ENCODE measurements at regions of chr2 and their contacts with region 1.

Region 1: DNA sequence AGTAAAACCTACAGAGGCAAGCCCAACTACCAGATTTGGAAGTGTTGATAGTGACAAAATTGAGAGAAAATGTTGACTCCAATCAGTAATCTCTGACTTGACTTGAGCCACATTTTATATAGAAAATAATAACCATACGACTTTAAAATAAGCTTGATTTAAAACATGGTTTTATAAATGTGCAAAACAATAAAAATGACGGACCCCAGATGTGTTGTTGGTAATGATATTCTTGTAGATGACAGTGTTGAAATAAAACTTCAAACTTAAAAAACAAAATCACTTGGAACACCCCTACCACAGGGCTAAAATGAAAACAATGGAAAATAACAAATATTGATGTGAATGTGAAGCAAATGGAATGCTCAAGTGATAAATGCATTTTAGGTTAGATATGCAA is 188.1 kb downstream of the SRBD1 start:
- DNase-seq: no peak
- H3K4me3 ChIP-seq: no peak overlapping the region
- H3K27ac ChIP-seq: no peak overlapping the region
- H3K4me1 ChIP-seq: no peaks in the 10 kb centered on the region
- H3K27me3 ChIP-seq: no peaks in the 10 kb centered on the region
- CTCF ChIP-seq: no peak

Region 2: GRCh38 chr2:45283764-45284620 is 138.9 kb before region 1 on chr2:
- intact Hi-C with region 1: loop called (anchors 10 kb)
- DNase-seq: peak in 1 of 2 donors; percentile 78
- H3K4me3 ChIP-seq: no peak overlapping the region
- H3K27ac ChIP-seq: peak overlapping the region; percentile 65 to 72
- H3K4me1 ChIP-seq: peaks cover 0 to 34% (median 17%) of the 10 kb centered on the region in 4 donors
- H3K27me3 ChIP-seq: no peaks in the 10 kb centered on the region
- CTCF ChIP-seq: no peak

Measured in tibial artery (tissue), 4 donors.